Endothelial cell of umbilical vein (primary cell): ENCODE measurements at regions of chr6 and their contacts with region 1.

Region 1: DNA sequence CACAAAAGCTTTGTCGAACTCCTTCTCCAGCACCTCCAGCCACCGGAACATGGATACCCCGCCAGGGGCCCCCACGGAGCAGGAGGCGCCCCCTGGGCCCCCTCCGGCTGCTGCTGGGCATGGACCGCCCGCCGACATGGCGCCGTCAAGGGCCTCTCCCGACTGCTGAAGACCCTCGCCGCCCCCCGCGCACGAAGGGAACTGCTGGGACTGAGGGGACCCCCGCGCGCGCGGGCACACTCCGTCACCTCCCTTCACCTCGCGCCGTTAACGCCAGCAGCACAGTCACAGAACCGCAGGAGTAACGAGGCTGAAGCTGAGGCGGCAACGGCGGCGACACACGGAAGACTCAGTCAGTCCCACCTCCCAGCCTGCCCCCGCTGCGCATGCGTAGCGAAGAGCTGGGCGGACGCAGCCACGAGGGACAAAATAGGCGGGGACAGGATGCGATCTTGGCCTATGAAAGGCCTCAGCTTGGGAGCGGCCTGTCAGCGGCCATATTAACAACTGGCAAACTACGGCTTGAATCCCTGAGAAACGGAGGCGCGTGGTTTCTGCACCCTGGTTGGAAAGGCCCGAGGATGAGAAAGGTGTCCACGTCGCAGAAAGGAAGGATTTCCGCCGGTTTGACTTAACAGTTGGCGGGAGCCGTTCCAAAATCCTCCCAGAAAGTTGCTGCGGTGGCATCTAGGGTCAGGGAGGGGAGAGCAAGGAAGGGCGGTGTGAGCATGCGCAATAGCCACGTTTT is at the start of gene GOPC:
- DNase-seq: peak; percentile 99
- H3K4me3 ChIP-seq: peak within 1 kb of the TSS; percentile 51 to 94 (median 91)
- H3K27ac ChIP-seq: peak within 1 kb of the TSS; percentile 72
- H3K4me1 ChIP-seq: peaks cover 20% of the 10 kb centered on the region
- H3K27me3 ChIP-seq: peaks cover 0 to 8% of the 10 kb centered on the region in 2 experiments
- CTCF ChIP-seq: peak in 1 of 2 donors; percentile 41
- POLR2A ChIP-seq: peak; percentile 83
- total RNA-seq, gene GOPC: 21.3 and 22.8 TPM in 2 replicates

Region 2: DNA sequence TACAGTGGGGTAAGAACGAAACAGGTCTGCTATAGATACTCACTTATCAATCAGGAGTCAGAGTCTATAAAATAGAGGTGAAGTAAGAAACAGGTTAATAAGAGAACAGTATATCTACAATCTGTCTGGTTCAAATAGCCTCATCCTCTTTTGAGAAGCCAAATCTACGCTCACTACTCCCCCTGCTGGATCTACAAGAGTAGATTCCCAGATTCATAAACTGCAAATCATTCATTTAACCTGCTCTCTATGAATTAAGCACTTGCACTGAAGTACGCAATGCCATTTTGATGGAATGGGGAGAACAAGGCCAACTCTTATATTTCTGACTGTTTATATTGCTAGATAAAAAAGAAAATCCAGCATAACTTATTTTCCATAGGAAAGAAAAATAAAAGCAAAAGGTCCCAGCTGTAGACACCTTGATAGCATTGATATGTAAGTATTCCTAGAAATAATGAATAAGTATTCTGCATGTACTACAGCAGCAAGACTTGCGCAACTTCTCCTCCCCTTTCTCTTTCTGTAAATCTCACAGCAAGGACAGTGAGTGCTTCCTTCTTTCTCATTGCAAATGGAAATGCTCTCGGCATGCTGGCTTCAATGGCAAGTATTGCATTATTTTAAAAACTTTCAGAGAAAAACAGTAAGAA is 633.0 kb before region 1 on chr6:
- CTCF ChIA-PET with region 1: interaction called, 3 read pairs
- POLR2A ChIA-PET with region 1: no interaction called
- dilution Hi-C with region 1: no loop called
- intact Hi-C with region 1: loop called (anchors 1 kb)
- DNase-seq: peak; percentile 50
- H3K4me3 ChIP-seq: no peak overlapping the region
- H3K27ac ChIP-seq: no peak overlapping the region
- H3K4me1 ChIP-seq: no peaks in the 10 kb centered on the region
- H3K27me3 ChIP-seq: no peaks in the 10 kb centered on the region
- CTCF ChIP-seq: peak; percentile 38 to 49
- POLR2A ChIP-seq: no peak

Region 3: GRCh38 chr6:117346142-117346930 is 256.0 kb before region 1 on chr6:
- CTCF ChIA-PET with region 1: interaction called, 6 read pairs
- POLR2A ChIA-PET with region 1: no interaction called
- dilution Hi-C with region 1: no loop called
- intact Hi-C with region 1: loop called (anchors 1 kb)
- DNase-seq: peak; percentile 32
- H3K4me3 ChIP-seq: no peak overlapping the region
- H3K27ac ChIP-seq: no peak overlapping the region
- H3K4me1 ChIP-seq: no peaks in the 10 kb centered on the region
- H3K27me3 ChIP-seq: peaks cover under 1 to 5% of the 10 kb centered on the region in 2 experiments
- CTCF ChIP-seq: peak in 1 of 2 donors; percentile 19
- POLR2A ChIP-seq: no peak

Region 4: GRCh38 chr6:117399924-117400323 is 202.4 kb before region 1 on chr6:
- CTCF ChIA-PET with region 1: interaction called, 49 read pairs
- POLR2A ChIA-PET with region 1: no interaction called
- dilution Hi-C with region 1: no loop called
- intact Hi-C with region 1: loop called (anchors 1 kb)
- DNase-seq: peak; percentile 13
- H3K4me3 ChIP-seq: no peak overlapping the region
- H3K27ac ChIP-seq: no peak overlapping the region
- H3K4me1 ChIP-seq: no peaks in the 10 kb centered on the region
- H3K27me3 ChIP-seq: peaks cover 0 to 5% of the 10 kb centered on the region in 2 experiments
- CTCF ChIP-seq: no peak
- POLR2A ChIP-seq: no peak

Region 5: GRCh38 chr6:117463762-117464665 is 138.3 kb before region 1 on chr6:
- CTCF ChIA-PET with region 1: no interaction called
- POLR2A ChIA-PET with region 1: interaction called, 3 read pairs
- dilution Hi-C with region 1: no loop called
- intact Hi-C with region 1: loop called (anchors 1 kb)
- DNase-seq: peak; percentile 69
- H3K4me3 ChIP-seq: peak overlapping the region in 1 of 3 experiments; percentile 1
- H3K27ac ChIP-seq: peak overlapping the region; percentile 81
- H3K4me1 ChIP-seq: peaks cover 25% of the 10 kb centered on the region
- H3K27me3 ChIP-seq: no peaks in the 10 kb centered on the region
- CTCF ChIP-seq: no peak
- POLR2A ChIP-seq: no peak

Region 6: GRCh38 chr6:117547688-117548621 is 54.4 kb before region 1 on chr6:
- CTCF ChIA-PET with region 1: interaction called, 4 read pairs
- POLR2A ChIA-PET with region 1: interaction called, 3 read pairs
- dilution Hi-C with region 1: no loop called
- intact Hi-C with region 1: loop called (anchors 1 kb)
- DNase-seq: peak; percentile 64
- H3K4me3 ChIP-seq: peak overlapping the region in 2 of 3 experiments; percentile 8 to 24
- H3K27ac ChIP-seq: peak overlapping the region; percentile 75
- H3K4me1 ChIP-seq: peaks cover 35% of the 10 kb centered on the region
- H3K27me3 ChIP-seq: no peaks in the 10 kb centered on the region
- CTCF ChIP-seq: peak in 1 of 2 donors; percentile 7
- POLR2A ChIP-seq: no peak

Region 7: DNA sequence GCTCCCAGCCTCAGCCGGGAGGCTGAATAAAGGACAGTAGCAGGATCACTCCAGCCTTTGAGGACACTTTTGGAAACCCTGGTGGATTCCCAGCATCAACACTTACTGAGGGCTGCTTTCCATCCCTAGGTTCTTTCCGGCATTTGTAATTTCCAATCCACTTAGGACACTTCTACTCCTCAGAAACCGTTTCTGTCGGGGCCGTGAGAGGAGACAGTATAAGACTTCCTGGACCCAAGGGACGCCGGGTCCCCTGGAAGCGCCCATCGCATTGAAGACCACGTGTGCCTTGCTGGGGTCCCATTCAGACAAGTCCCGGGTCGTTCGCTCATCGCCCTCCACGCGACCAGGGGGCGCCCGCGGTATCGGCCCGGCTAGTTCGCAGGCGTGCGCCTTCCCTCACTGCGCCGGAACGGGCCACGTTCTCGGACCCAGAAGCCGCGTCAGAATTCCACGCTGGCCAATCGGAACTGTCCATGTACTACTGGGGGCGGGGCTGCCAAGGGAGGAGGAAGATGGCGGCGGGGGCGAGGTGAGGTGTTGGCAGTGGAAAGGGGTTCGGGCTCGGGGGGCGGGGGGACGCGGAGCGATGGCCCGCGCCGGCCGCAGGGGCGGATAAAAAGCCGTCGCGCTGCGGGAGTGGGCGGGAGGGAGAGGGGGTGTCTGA is 72.8 kb after region 1 on chr6 and contains the start of gene NUS1:
- CTCF ChIA-PET with region 1: no interaction called
- POLR2A ChIA-PET with region 1: no interaction called
- dilution Hi-C with region 1: no loop called
- intact Hi-C with region 1: loop called (anchors 1 kb)
- DNase-seq: peak; percentile 97
- H3K4me3 ChIP-seq: peak within 1 kb of the TSS; percentile 33 to 82 (median 75)
- H3K27ac ChIP-seq: peak within 1 kb of the TSS; percentile 52
- H3K4me1 ChIP-seq: peaks cover 21% of the 10 kb centered on the region
- H3K27me3 ChIP-seq: no peaks in the 10 kb centered on the region
- CTCF ChIP-seq: peak; percentile 86 to 88
- POLR2A ChIP-seq: no peak
- total RNA-seq, gene NUS1: 33.4 and 34.3 TPM in 2 replicates

Region 8: GRCh38 chr6:118171852-118172251 is 569.5 kb after region 1 on chr6:
- CTCF ChIA-PET with region 1: no interaction called
- POLR2A ChIA-PET with region 1: no interaction called
- dilution Hi-C with region 1: no loop called
- intact Hi-C with region 1: no loop called
- DNase-seq: no peak
- H3K4me3 ChIP-seq: no peak overlapping the region
- H3K27ac ChIP-seq: no peak overlapping the region
- H3K4me1 ChIP-seq: no peaks in the 10 kb centered on the region
- H3K27me3 ChIP-seq: no peaks in the 10 kb centered on the region
- CTCF ChIP-seq: no peak
- POLR2A ChIP-seq: no peak